OCI-LY7 (cell line): ENCODE measurements at regions of chr4 and their contacts with region 1.

Region 1: DNA sequence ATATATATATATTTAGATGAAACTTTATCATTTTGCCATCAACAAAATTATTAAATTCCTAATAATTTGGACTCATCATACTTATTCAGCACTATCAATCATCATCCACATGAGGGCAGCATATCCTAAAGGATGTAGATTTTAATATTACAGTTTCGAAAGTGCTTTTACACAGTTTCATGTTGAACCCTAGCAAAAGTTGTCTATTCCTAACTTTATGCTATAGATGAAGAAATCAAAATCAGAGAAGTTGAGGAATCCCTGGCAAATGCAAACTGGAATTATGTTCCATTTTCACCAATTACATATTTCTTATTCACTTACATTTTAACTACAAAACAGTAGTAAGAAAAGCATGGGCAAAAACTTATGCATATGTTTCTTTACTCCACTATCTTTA is 36.6 kb upstream of the UGT2A1 start:
- DNase-seq: peak; percentile 36
- H3K4me3 ChIP-seq: no peak overlapping the region
- H3K27ac ChIP-seq: no peak overlapping the region
- H3K4me1 ChIP-seq: no peaks in the 10 kb centered on the region
- CTCF ChIP-seq: peak; percentile 86

Region 2: GRCh38 chr4:69881173-69881773 is 191.7 kb after region 1 on chr4:
- CTCF ChIA-PET with region 1: no interaction called
- POLR2A ChIA-PET with region 1: no interaction called
- intact Hi-C with region 1: loop called (anchors 1 kb)
- DNase-seq: peak; percentile 33
- H3K4me3 ChIP-seq: no peak overlapping the region
- H3K27ac ChIP-seq: no peak overlapping the region
- H3K4me1 ChIP-seq: no peaks in the 10 kb centered on the region
- CTCF ChIP-seq: peak; percentile 81

Region 3: GRCh38 chr4:70183168-70183939 is 493.8 kb after region 1 on chr4:
- CTCF ChIA-PET with region 1: no interaction called
- POLR2A ChIA-PET with region 1: no interaction called
- intact Hi-C with region 1: loop called (anchors 5 kb)
- DNase-seq: peak; percentile 62
- H3K4me3 ChIP-seq: no peak overlapping the region
- H3K27ac ChIP-seq: no peak overlapping the region
- H3K4me1 ChIP-seq: no peaks in the 10 kb centered on the region
- CTCF ChIP-seq: peak; percentile 97

Region 4: GRCh38 chr4:70505151-70505748 is 815.7 kb after region 1 on chr4:
- CTCF ChIA-PET with region 1: no interaction called
- POLR2A ChIA-PET with region 1: no interaction called
- intact Hi-C with region 1: loop called (anchors 5 kb)
- DNase-seq: peak; percentile 59
- H3K4me3 ChIP-seq: no peak overlapping the region
- H3K27ac ChIP-seq: no peak overlapping the region
- H3K4me1 ChIP-seq: no peaks in the 10 kb centered on the region
- CTCF ChIP-seq: peak; percentile 98